HepG2 (cell line): ENCODE measurements at regions of chr15 and their contacts with region 1.

Region 1: GRCh38 chr15:35562641-35563040 is 16.7 kb upstream of the DPH6 start:
- DNase-seq: no peak
- ATAC-seq: no peak
- H3K4me3 ChIP-seq: no peak overlapping the region
- H3K27ac ChIP-seq: no peak overlapping the region
- H3K4me1 ChIP-seq: no peaks in the 10 kb centered on the region
- H3K27me3 ChIP-seq: no peaks in the 10 kb centered on the region
- CTCF ChIP-seq: no peak
- EP300 ChIP-seq: no peak
- POLR2A ChIP-seq: no peak
- RAD21 ChIP-seq: no peak

Region 2: GRCh38 chr15:35545824-35546510 is 16.7 kb before region 1 on chr15 and contains the start of gene DPH6:
- CTCF ChIA-PET with region 1: no interaction called
- POLR2A ChIA-PET with region 1: no interaction called
- in situ Hi-C with region 1: no loop called
- intact Hi-C with region 1: loop called (anchors 2 kb)
- DNase-seq: peak; percentile 67
- ATAC-seq: peak; percentile 96
- H3K4me3 ChIP-seq: peak within 1 kb of the TSS; percentile 64 to 80 (median 79)
- H3K27ac ChIP-seq: peak within 1 kb of the TSS; percentile 91
- H3K4me1 ChIP-seq: peaks cover 24% of the 10 kb centered on the region
- H3K27me3 ChIP-seq: no peaks in the 10 kb centered on the region
- CTCF ChIP-seq: peak; percentile 8; the same call in 1 of the 2 replicates
- EP300 ChIP-seq: no peak; a peak in 1 of 4 replicates
- POLR2A ChIP-seq: peak; percentile 78 to 86
- RAD21 ChIP-seq: peak; percentile 43; the same call in 1 of the 2 replicates
- total RNA-seq, gene DPH6: 25.8 and 27.0 TPM in 2 replicates

Region 3: GRCh38 chr15:35583863-35584528 is 21.4 kb after region 1 on chr15:
- CTCF ChIA-PET with region 1: no interaction called
- POLR2A ChIA-PET with region 1: no interaction called
- in situ Hi-C with region 1: no loop called
- intact Hi-C with region 1: no loop called
- DNase-seq: no peak
- ATAC-seq: no peak
- H3K4me3 ChIP-seq: no peak overlapping the region
- H3K27ac ChIP-seq: no peak overlapping the region
- H3K4me1 ChIP-seq: no peaks in the 10 kb centered on the region
- H3K27me3 ChIP-seq: no peaks in the 10 kb centered on the region
- CTCF ChIP-seq: no peak
- EP300 ChIP-seq: no peak
- POLR2A ChIP-seq: no peak
- RAD21 ChIP-seq: no peak